ENCODE measurements at regions of chr16 and their contacts with region 1.

Region 1: DNA sequence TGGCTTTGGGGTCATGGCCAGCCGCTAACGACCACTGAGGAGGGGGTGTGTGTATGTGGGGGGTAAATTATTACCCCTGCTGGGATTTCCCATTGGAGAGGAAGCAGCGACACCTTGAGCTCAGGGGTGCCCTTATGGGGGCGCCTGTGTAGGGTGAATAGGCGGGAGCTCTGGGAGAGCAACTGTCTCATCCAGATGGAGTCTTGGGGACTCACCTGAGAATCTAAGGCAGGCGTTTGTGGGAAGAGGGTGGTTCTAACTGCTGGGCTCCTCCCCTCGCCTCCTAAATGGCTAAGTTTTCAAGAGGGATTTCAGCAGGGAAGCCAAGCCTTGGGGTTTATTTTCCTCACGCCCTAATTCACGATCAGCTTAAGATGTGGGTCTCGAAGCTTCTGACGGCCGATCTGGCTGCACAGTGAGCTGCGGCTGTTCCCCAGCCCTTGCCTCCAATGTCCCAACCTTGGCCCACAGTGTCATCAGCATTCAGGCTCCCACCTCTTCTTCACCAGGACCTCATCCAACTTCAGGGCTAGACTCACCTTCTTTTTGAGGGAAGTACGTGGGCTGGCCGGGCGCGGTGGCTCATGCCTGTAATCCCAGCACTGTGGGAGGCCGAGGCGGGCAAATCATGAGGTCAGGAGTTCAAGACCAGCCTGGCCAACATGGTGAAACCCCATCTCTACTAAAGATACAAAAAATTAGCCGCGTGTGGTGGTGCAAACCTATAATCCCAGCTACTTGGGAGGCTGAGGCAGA is 136.9 kb upstream of the EEF2KMT start:
- DNase-seq: no peak

Region 2: DNA sequence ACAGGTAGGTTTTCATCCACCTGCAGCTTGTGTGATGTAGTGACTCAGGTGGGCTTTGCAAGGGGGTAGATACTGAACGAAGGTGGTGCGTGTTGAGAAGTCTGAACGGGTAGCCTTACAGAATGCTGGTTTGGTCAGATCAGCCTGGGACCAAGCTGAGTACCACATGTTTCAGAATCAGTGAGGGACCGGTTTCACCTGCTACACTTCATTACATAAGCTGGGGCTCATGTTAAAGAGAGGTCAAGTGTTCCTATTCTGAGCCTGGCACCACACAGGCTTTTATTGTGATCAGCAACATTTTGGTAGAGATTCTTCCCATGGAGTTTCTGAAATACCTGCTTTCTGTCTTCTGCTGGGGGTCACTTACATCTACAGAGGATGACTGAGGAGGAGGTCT is 70.5 kb after region 1 on chr16:
- intact Hi-C with region 1: no loop called
- DNase-seq: no peak

Region 3: DNA sequence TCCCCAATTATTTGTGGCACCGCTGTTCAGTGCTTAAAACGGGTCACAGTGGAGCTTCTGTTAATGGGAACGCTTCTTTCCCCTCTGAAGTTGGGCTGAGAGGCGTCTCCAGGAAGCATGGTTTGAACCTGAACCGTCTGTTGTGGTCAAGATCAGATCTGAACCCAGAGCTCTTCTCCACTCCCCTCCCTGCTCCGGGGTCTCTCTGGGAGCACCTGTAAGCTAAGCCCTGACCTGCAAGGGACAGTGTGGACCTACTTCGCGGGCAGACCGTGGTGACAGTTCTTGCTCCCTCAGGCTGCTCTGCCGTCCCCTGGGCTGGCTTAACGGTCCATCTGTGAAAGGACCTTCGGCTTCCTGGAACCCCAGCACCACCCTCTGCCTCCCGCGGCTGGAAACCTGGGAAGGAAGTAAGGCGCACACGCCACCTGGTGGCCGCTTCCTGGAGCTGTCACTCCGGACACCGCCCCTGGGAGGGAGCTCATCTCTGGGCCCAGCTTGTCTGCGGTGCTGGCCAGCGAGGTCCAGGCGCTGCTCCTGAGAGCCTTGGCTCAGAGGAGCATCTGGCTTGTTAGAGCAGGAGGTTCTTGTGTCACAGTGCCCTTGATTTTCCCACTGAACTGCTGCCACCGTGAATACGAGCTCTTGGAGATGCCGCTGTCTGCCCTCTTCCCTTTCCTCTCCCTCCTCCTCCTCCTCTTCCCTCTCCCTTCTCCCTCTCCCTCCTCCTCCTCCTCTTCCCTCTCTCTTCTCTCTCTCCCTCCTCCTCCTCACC is 381.6 kb after region 1 on chr16:
- intact Hi-C with region 1: loop called (anchors 10 kb)
- DNase-seq: no peak

Measured in cardiac septum (tissue), 1 donor.